Heart left ventricle (tissue), 16 donors: ENCODE measurements at regions of chr10 and their contacts with region 1.

Region 1: GRCh38 chr10:98309366-98310355 is 41.7 kb upstream of the LOXL4 start:
- DNase-seq: peak; percentile 67 to 88 (median 73)
- ATAC-seq: peak; percentile 82 to 98 (median 95)
- H3K4me3 ChIP-seq: peak overlapping the region in 4 of 12 donors; percentile 3 to 25 (median 18)
- H3K27ac ChIP-seq: peak overlapping the region in 1 of 12 donors; percentile 10
- H3K4me1 ChIP-seq: peaks cover 0 to 16% (median 8%) of the 10 kb centered on the region in 12 donors
- H3K27me3 ChIP-seq: peaks cover 0 to 13% (median 0%) of the 10 kb centered on the region in 9 donors
- CTCF ChIP-seq: peak; percentile 66 to 94 (median 82)
- POLR2A ChIP-seq: no peak

Region 2: GRCh38 chr10:98045785-98046389 is 263.8 kb before region 1 on chr10:
- intact Hi-C with region 1: loop called in 1 of 10 experiments (anchors 10 kb)
- DNase-seq: peak in 4 of 5 donors; percentile 45 to 57 (median 49)
- ATAC-seq: peak in 3 of 4 donors; percentile 40 to 65 (median 45)
- H3K4me3 ChIP-seq: no peak overlapping the region
- H3K27ac ChIP-seq: no peak overlapping the region
- H3K4me1 ChIP-seq: peaks cover 0 to 24% (median 5%) of the 10 kb centered on the region in 12 donors
- H3K27me3 ChIP-seq: peaks cover 0 to 12% (median 0%) of the 10 kb centered on the region in 9 donors
- CTCF ChIP-seq: peak; percentile 75 to 93 (median 84)
- POLR2A ChIP-seq: no peak

Region 3: DNA sequence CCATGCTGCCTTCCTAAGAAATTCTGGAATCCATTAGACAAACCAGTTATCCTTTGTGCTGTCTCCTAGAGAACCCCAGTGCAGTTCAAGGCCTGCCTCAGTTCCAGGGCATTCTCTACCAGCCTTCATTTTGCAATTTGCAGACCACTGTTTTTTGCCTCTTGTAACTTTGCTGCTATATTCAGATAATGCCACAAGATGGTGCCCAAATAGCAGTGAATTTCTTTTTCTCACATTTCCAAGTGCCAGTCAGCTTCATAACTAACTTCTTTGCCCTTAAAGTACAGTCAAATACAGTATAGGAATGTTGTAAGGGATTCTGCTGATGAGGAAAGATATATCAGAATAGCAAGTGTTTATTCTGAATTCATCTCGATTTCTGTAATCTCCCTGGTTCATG is 66.8 kb before region 1 on chr10:
- intact Hi-C with region 1: loop called in 3 of 10 experiments (anchors 2 to 5 kb)
- DNase-seq: no peak
- ATAC-seq: no peak
- H3K4me3 ChIP-seq: no peak overlapping the region
- H3K27ac ChIP-seq: no peak overlapping the region
- H3K4me1 ChIP-seq: peaks cover 0 to 4% (median 0%) of the 10 kb centered on the region in 12 donors
- H3K27me3 ChIP-seq: no peaks in the 10 kb centered on the region
- CTCF ChIP-seq: peak in 10 of 12 donors; percentile 15 to 54 (median 42)
- POLR2A ChIP-seq: no peak

Region 4: GRCh38 chr10:98269072-98269912 is 40.4 kb before region 1 on chr10:
- intact Hi-C with region 1: loop called in 6 of 10 experiments (anchors 2 to 5 kb)
- DNase-seq: peak; percentile 84 to 92 (median 86)
- ATAC-seq: peak; percentile 92 to 95 (median 94)
- H3K4me3 ChIP-seq: peak overlapping the region in 7 of 12 donors; percentile 50 to 69 (median 62)
- H3K27ac ChIP-seq: peak overlapping the region; percentile 56 to 89 (median 86)
- H3K4me1 ChIP-seq: peaks cover 0 to 34% (median 22%) of the 10 kb centered on the region in 12 donors
- H3K27me3 ChIP-seq: peaks cover 0 to 18% (median 0%) of the 10 kb centered on the region in 9 donors
- CTCF ChIP-seq: no peak
- POLR2A ChIP-seq: no peak

Region 5: GRCh38 chr10:98361131-98362025 is 51.7 kb after region 1 on chr10:
- intact Hi-C with region 1: no loop called
- DNase-seq: peak; percentile 55 to 94 (median 83)
- ATAC-seq: peak; percentile 80 to 97 (median 94)
- H3K4me3 ChIP-seq: peak overlapping the region in 4 of 12 donors; percentile 4 to 24 (median 14)
- H3K27ac ChIP-seq: peak overlapping the region in 9 of 12 donors; percentile 8 to 80 (median 43)
- H3K4me1 ChIP-seq: peaks cover 0 to 11% (median 2%) of the 10 kb centered on the region in 12 donors
- H3K27me3 ChIP-seq: peaks cover 0 to 6% (median 0%) of the 10 kb centered on the region in 9 donors
- CTCF ChIP-seq: no peak
- POLR2A ChIP-seq: no peak